ENCODE measurements at regions of chr19 and their contacts with region 1.

Region 1: GRCh38 chr19:52171321-52172169 is at the start of gene ZNF836:
- DNase-seq: peak; percentile 72 to 95 (median 91)
- ATAC-seq: peak; percentile 98
- H3K4me3 ChIP-seq: peak within 1 kb of the TSS; percentile 92
- H3K4me3 Mint-ChIP-seq: peak within 1 kb of the TSS; percentile 92 to 98 (median 96)
- H3K27ac ChIP-seq: peak within 1 kb of the TSS; percentile 92
- H3K27ac Mint-ChIP-seq: peak within 1 kb of the TSS; percentile 96 to 99 (median 98)
- H3K4me1 ChIP-seq: peaks cover 18 to 19% of the 10 kb centered on the region in 2 donors
- H3K4me1 Mint-ChIP-seq: peaks cover 23 to 48% (median 45%) of the 10 kb centered on the region in 7 donors
- H3K27me3 ChIP-seq: no peaks in the 10 kb centered on the region
- H3K27me3 Mint-ChIP-seq: no peaks in the 10 kb centered on the region
- total RNA-seq, gene ZNF836: 20.1 to 57.5 (median 27.4) TPM

Region 2: GRCh38 chr19:51570962-51571575 is 600.5 kb before region 1 on chr19 and contains the start of gene ZNF175:
- CTCF ChIA-PET with region 1: no interaction called
- POLR2A ChIA-PET with region 1: no interaction called
- intact Hi-C with region 1: loop called in 1 of 2 experiments (anchors 5 kb)
- DNase-seq: peak; percentile 41 to 79 (median 71)
- ATAC-seq: peak; percentile 96
- H3K4me3 ChIP-seq: peak within 1 kb of the TSS; percentile 84
- H3K4me3 Mint-ChIP-seq: peak within 1 kb of the TSS; percentile 82 to 99 (median 96)
- H3K27ac ChIP-seq: peak within 1 kb of the TSS; percentile 30
- H3K27ac Mint-ChIP-seq: peak within 1 kb of the TSS; percentile 36 to 90 (median 80)
- H3K4me1 ChIP-seq: peaks cover 10 to 11% of the 10 kb centered on the region in 2 donors
- H3K4me1 Mint-ChIP-seq: peaks cover 21 to 45% (median 34%) of the 10 kb centered on the region in 7 donors
- H3K27me3 ChIP-seq: no peaks in the 10 kb centered on the region
- H3K27me3 Mint-ChIP-seq: peaks cover 4 to 18% (median 7%) of the 10 kb centered on the region in 5 donors
- total RNA-seq, gene ZNF175: 6.8 to 19.1 (median 10.2) TPM

Region 3: DNA sequence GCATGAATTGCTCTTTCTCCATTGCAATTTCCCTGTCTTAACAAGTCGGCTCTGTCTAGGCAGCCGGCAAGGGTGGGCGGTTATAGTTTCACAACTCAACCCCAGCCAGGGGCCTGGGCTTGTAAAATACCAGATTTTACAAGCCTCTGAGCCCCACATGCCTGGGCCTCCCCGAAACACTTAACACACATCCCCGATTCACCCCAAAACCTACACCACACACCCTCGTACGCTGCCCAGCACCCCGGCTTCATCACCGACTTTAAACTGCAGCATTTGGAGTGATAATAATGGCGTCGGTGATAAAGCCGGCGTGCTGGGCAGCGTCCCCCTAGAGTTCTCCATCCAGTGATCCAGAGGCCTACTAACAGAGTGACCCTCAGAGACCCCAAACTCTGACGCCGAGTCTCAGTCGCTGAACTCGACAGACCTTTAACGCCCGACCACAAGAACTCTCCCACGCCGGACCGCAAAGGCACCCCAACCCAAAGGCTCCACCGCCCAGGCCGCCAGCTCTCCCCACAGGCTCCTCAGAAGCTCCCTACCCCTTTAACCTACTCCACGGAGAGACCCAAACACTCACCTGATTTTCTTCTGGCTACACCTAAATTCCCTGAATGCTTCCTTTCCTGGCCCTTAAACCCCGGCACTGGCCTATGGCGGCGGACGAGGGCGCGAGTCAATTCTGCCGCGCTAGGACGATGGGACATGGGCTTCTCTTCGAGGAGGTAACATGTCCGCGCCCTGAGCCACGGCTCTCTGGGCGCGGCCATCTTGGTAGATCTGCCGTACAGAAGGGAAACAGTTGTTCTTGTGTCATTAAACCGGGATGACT is 267.0 kb before region 1 on chr19 and contains the start of gene ZNF649:
- CTCF ChIA-PET with region 1: no interaction called
- POLR2A ChIA-PET with region 1: no interaction called
- intact Hi-C with region 1: loop called in 1 of 2 experiments (anchors 10 kb)
- DNase-seq: peak; percentile 67 to 84 (median 74)
- ATAC-seq: peak; percentile 98
- H3K4me3 ChIP-seq: peak within 1 kb of the TSS; percentile 84
- H3K4me3 Mint-ChIP-seq: peak within 1 kb of the TSS; percentile 87 to 100 (median 99)
- H3K27ac ChIP-seq: peak within 1 kb of the TSS; percentile 84
- H3K27ac Mint-ChIP-seq: peak within 1 kb of the TSS; percentile 89 to 99 (median 97)
- H3K4me1 ChIP-seq: peaks cover 0 to 5% of the 10 kb centered on the region in 2 donors
- H3K4me1 Mint-ChIP-seq: peaks cover 8 to 33% (median 28%) of the 10 kb centered on the region in 7 donors
- H3K27me3 ChIP-seq: no peaks in the 10 kb centered on the region
- H3K27me3 Mint-ChIP-seq: peaks cover 0 to 31% (median 19%) of the 10 kb centered on the region in 5 donors
- total RNA-seq, gene ZNF649: 11.1 to 33.4 (median 14.5) TPM

Region 4: GRCh38 chr19:52095172-52096014 is 76.2 kb before region 1 on chr19 and contains the start of gene ZNF841:
- CTCF ChIA-PET with region 1: no interaction called
- POLR2A ChIA-PET with region 1: no interaction called
- intact Hi-C with region 1: loop called in 1 of 2 experiments (anchors 1 kb)
- DNase-seq: peak; percentile 64 to 84 (median 75)
- ATAC-seq: peak; percentile 98
- H3K4me3 ChIP-seq: peak within 1 kb of the TSS; percentile 86
- H3K4me3 Mint-ChIP-seq: peak within 1 kb of the TSS; percentile 87 to 99 (median 96)
- H3K27ac ChIP-seq: peak within 1 kb of the TSS; percentile 81
- H3K27ac Mint-ChIP-seq: peak within 1 kb of the TSS; percentile 62 to 99 (median 94)
- H3K4me1 ChIP-seq: peaks cover 0 to 9% of the 10 kb centered on the region in 2 donors
- H3K4me1 Mint-ChIP-seq: peaks cover 24 to 47% (median 39%) of the 10 kb centered on the region in 7 donors
- H3K27me3 ChIP-seq: no peaks in the 10 kb centered on the region
- H3K27me3 Mint-ChIP-seq: no peaks in the 10 kb centered on the region
- total RNA-seq, gene ZNF841: 22.6 to 43.5 (median 27.5) TPM

Region 5: GRCh38 chr19:52219611-52220010 is 48.1 kb after region 1 on chr19:
- CTCF ChIA-PET with region 1: no interaction called
- POLR2A ChIA-PET with region 1: no interaction called
- intact Hi-C with region 1: no loop called
- DNase-seq: no peak
- ATAC-seq: no peak
- H3K4me3 ChIP-seq: no peak overlapping the region
- H3K4me3 Mint-ChIP-seq: no peak overlapping the region
- H3K27ac ChIP-seq: no peak overlapping the region
- H3K27ac Mint-ChIP-seq: peak overlapping the region in 2 of 9 donors; percentile 41 to 43
- H3K4me1 ChIP-seq: no peaks in the 10 kb centered on the region
- H3K4me1 Mint-ChIP-seq: peaks cover 0 to 5% (median 0%) of the 10 kb centered on the region in 7 donors
- H3K27me3 ChIP-seq: no peaks in the 10 kb centered on the region
- H3K27me3 Mint-ChIP-seq: no peaks in the 10 kb centered on the region

Region 6: DNA sequence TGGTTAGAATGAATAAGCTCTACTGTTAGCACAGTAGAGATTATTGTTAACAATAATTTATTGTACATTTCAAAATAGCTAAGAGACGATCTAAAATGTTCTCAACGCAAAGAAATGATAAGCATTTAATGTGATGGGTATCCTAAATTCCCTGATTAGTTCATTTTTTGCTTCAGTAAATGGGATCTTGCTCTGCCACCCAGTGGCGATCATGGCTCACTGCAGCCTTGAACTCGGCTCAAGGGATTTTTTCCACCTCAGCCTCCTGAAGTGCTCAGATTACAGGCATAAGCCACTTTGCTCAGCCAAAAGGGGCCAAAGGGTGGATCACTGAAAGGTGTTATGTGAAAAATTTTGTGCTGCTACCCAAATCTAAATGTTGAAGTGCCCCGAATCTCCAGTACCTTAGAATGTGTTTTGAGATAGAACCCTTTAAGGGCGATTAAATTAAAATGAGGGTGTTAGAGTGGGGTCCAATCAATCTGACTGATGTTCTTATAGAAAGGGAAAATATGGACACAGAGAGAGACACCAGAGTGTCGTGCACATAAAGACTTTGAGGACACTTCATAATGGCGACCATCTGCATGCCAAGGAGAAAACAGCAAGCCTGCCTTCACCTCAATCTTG is 66.3 kb after region 1 on chr19:
- CTCF ChIA-PET with region 1: interaction called, 3 read pairs
- POLR2A ChIA-PET with region 1: no interaction called
- intact Hi-C with region 1: loop called in 1 of 2 experiments (anchors 10 kb)
- DNase-seq: peak in 8 of 9 donors; percentile 26 to 60 (median 50)
- ATAC-seq: peak; percentile 88
- H3K4me3 ChIP-seq: no peak overlapping the region
- H3K4me3 Mint-ChIP-seq: no peak overlapping the region
- H3K27ac ChIP-seq: no peak overlapping the region
- H3K27ac Mint-ChIP-seq: peak overlapping the region in 1 of 9 donors; percentile 26
- H3K4me1 ChIP-seq: no peaks in the 10 kb centered on the region
- H3K4me1 Mint-ChIP-seq: peaks cover 0 to 6% (median 0%) of the 10 kb centered on the region in 7 donors
- H3K27me3 ChIP-seq: no peaks in the 10 kb centered on the region
- H3K27me3 Mint-ChIP-seq: peaks cover 0 to 2% (median 0%) of the 10 kb centered on the region in 5 donors

Region 7: DNA sequence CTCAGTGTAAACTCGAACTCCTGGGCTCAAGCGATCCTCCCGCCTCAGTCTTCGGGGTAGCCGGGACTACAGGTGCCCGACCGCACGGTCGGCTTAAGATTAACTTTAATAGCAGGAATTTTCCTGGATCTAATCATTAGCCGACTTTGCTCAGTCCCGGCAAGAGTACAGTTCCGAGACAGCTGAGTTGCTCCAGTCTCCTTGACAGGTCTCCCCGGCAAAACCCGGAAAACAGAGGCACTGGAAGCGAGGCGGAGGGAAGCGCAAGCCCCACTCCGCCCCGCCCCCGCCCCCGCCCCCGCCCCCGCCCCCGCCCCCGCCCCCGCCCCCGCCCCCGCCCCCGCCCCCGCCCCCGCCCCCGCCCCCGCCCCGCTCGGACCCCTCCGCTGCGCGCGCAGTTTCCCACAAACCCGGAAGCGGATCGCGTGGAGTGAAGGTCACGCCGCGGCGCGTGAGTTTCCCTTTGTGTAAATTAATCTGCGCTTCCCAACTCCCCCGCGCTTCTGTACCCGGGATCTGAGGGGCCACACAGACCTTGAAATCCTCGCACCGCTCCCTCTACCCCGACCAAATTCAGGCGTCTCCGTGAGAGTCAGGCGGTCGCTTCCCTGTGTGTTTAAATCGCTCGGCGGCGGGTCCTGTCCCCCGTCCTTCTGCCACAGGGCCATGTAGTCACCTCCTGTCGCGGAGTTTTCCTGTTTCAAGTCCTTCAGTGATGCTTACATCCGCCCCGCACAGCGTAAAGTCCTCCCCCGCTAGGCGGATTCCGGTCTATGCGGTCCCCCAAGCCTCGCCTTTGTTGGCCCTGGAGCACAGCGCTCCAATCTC is 125.4 kb after region 1 on chr19 and contains the start of gene ZNF480:
- CTCF ChIA-PET with region 1: no interaction called
- POLR2A ChIA-PET with region 1: no interaction called
- intact Hi-C with region 1: loop called in 1 of 2 experiments (anchors 1 kb)
- DNase-seq: peak; percentile 67 to 91 (median 87)
- ATAC-seq: peak; percentile 89
- H3K4me3 ChIP-seq: peak within 1 kb of the TSS; percentile 85
- H3K4me3 Mint-ChIP-seq: peak within 1 kb of the TSS; percentile 89 to 99 (median 98)
- H3K27ac ChIP-seq: peak within 1 kb of the TSS; percentile 97
- H3K27ac Mint-ChIP-seq: peak within 1 kb of the TSS; percentile 95 to 99 (median 98)
- H3K4me1 ChIP-seq: peaks cover 4 to 5% of the 10 kb centered on the region in 2 donors
- H3K4me1 Mint-ChIP-seq: peaks cover 15 to 32% (median 19%) of the 10 kb centered on the region in 7 donors
- H3K27me3 ChIP-seq: no peaks in the 10 kb centered on the region
- H3K27me3 Mint-ChIP-seq: peaks cover 0 to 3% (median 0%) of the 10 kb centered on the region in 5 donors
- total RNA-seq, gene ZNF480: 8.5 to 28.9 (median 13.3) TPM

Measured in naive thymus-derived CD4-positive, alpha-beta T cell (primary cell).